Heart right ventricle (tissue), 16 donors: ENCODE measurements at regions of chr10 and their contacts with region 1.

Region 1: GRCh38 chr10:91251430-91252056 is 31.1 kb downstream of the PCGF5 start:
- DNase-seq: peak in 1 of 2 donors; percentile 45
- ATAC-seq: peak in 7 of 8 donors; percentile 59 to 83 (median 70)
- H3K4me3 ChIP-seq: no peak overlapping the region
- H3K27ac ChIP-seq: no peak overlapping the region
- H3K4me1 ChIP-seq: peaks cover 0 to 27% (median 12%) of the 10 kb centered on the region in 9 donors
- H3K27me3 ChIP-seq: no peaks in the 10 kb centered on the region
- CTCF ChIP-seq: peak; percentile 85 to 97 (median 94)

Region 2: DNA sequence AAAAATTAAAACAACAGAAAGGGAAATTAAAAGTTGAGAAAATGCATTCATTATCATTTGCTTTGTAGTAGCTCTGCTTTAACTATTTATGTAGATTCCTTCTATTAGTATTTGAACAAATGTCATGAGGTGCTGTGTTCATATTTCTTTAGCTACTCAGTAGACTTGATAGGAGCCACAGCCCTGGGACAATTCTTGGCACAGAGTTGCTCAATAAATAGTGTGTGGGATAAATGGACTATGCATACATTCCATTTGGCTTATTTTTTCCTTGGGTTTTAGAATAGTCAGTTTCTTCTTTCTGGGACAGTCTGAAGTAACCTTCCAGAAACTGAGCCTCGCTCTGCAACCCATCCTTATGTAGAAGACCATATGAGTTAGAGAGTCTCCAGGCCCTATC is 366.4 kb before region 1 on chr10:
- intact Hi-C with region 1: loop called in 1 of 10 experiments (anchors 2 kb)
- DNase-seq: no peak
- ATAC-seq: no peak
- H3K4me3 ChIP-seq: no peak overlapping the region
- H3K27ac ChIP-seq: no peak overlapping the region
- H3K4me1 ChIP-seq: peaks cover 0 to 11% (median 0%) of the 10 kb centered on the region in 9 donors
- H3K27me3 ChIP-seq: no peaks in the 10 kb centered on the region
- CTCF ChIP-seq: no peak

Region 3: DNA sequence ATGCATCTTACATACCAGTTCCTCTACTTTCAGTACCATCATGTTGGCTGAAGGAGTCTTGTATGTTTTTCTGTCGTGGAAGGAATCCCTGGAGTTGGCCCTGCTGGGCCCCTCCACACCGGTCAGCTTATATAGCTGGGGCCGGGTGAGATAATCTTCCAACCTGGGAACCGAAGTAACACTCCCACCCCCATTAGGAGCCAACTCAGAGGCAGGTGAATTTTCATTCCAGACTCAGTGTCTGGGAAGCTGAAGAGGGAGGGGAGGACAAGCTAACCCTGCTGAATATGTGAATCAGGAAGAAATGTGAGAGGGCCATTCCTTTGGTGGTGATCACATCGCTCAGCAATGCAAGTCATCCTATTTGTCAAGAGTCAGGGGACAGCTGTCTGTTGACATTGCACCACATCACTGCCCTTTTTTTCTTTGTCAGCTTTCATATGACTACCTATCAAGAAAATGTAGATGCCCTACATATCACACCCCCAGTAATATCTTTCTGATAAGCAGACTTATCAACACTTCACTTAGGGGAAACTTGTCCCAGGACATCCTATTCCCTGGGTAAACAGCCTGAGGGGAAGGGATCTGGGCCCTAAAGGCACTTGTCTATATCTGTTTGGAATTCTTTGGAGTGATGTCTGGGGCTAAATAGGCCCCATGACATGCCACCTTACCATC is 330.4 kb before region 1 on chr10 and contains the start of gene ANKRD1:
- intact Hi-C with region 1: loop called in 3 of 10 experiments (anchors 2 to 10 kb)
- DNase-seq: peak in 1 of 2 donors; percentile 73
- ATAC-seq: peak; percentile 61 to 91 (median 80)
- H3K4me3 ChIP-seq: peak within 1 kb of the TSS; percentile 35 to 61 (median 49)
- H3K27ac ChIP-seq: peak within 1 kb of the TSS; percentile 67 to 91 (median 86)
- H3K4me1 ChIP-seq: peaks cover 0 to 14% (median 3%) of the 10 kb centered on the region in 9 donors
- H3K27me3 ChIP-seq: no peaks in the 10 kb centered on the region
- CTCF ChIP-seq: no peak
- total RNA-seq, gene ANKRD1: 1,390 to 8,287 (median 4,440) TPM

Region 4: GRCh38 chr10:91034494-91035159 is 216.9 kb before region 1 on chr10:
- intact Hi-C with region 1: loop called in 1 of 10 experiments (anchors 10 kb)
- DNase-seq: peak; percentile 68 to 75
- ATAC-seq: peak; percentile 27 to 86 (median 73)
- H3K4me3 ChIP-seq: no peak overlapping the region
- H3K27ac ChIP-seq: peak overlapping the region in 5 of 10 donors; percentile 12 to 49 (median 39)
- H3K4me1 ChIP-seq: peaks cover 0 to 31% (median 16%) of the 10 kb centered on the region in 9 donors
- H3K27me3 ChIP-seq: no peaks in the 10 kb centered on the region
- CTCF ChIP-seq: no peak

Region 5: GRCh38 chr10:91088300-91089140 is 163.0 kb before region 1 on chr10:
- intact Hi-C with region 1: loop called in 7 of 10 experiments (anchors 2 to 10 kb)
- DNase-seq: peak in 1 of 2 donors; percentile 55
- ATAC-seq: peak; percentile 81 to 98 (median 93)
- H3K4me3 ChIP-seq: no peak overlapping the region
- H3K27ac ChIP-seq: peak overlapping the region; percentile 24 to 92 (median 78)
- H3K4me1 ChIP-seq: peaks cover 0 to 30% (median 10%) of the 10 kb centered on the region in 9 donors
- H3K27me3 ChIP-seq: no peaks in the 10 kb centered on the region
- CTCF ChIP-seq: peak in 7 of 9 donors; percentile 10 to 40 (median 31)

Region 6: GRCh38 chr10:91493313-91493712 is 241.8 kb after region 1 on chr10:
- intact Hi-C with region 1: no loop called
- DNase-seq: no peak
- ATAC-seq: no peak
- H3K4me3 ChIP-seq: no peak overlapping the region
- H3K27ac ChIP-seq: no peak overlapping the region
- H3K4me1 ChIP-seq: no peaks in the 10 kb centered on the region
- H3K27me3 ChIP-seq: no peaks in the 10 kb centered on the region
- CTCF ChIP-seq: peak in 8 of 9 donors; percentile 35 to 72 (median 55)